ENCODE measurements at regions of chr5 and their contacts with region 1.

Region 1: DNA sequence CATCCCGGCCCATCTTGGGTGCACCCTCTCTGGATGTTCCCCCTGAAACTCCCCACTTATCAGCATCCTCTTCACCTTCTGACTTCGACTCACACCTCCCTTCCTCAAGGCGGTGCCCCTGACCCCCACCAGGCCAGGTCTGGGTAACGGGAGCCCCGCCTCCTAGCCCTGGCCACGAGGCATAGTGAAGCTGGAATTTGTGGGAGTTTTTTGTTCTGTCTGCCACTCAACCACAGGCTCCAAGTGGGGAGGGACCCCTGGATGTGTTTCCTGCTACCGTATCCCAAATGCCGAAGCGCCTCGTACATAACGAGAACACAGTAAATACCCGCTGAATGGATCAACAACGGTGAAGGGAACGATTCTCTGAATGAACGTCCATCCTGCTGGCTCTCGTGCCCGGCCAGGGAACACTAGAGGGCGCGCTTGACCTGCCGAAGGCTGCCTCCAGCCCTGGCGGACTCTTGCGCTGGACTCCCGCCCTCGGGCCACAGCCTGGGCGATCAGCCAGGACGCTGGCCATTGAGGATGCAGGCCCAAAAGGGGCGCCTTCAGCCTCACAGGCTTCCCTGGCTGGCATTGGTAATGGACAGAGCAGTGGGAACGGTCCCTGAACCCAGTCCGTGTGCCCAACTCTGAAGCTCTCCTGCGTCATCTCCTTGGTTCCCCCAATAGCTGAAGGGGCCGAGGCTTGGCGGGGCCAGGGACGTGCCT is 47.3 kb upstream of the PHYKPL start:
- DNase-seq: peak; percentile 83
- H3K4me3 ChIP-seq: no peak overlapping the region
- H3K27ac ChIP-seq: no peak overlapping the region
- H3K4me1 ChIP-seq: no peaks in the 10 kb centered on the region
- H3K27me3 ChIP-seq: peaks cover 2% of the 10 kb centered on the region
- CTCF ChIP-seq: peak; percentile 66 to 96 (median 91)
- POLR2A ChIP-seq: peak; percentile 15

Region 2: DNA sequence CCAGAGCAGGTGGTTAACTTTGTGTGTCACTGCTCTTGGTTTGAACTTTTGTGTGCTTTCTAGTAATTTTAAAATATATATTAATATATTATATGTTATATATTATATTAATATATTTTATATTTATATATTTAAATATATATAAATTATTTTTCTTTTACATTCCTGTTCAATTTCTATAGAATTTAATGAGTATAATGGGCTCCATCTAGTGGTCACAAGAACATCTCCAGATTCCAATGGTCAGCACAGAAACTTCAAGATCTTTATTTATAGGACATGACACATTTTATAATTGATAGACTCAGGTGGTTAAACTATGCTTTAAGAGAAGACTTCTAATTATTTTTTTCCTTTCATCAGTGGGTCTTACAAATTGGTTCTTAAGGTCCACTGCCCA is 271.2 kb after region 1 on chr5:
- intact Hi-C with region 1: loop called (anchors 2 kb)
- DNase-seq: no peak
- H3K4me3 ChIP-seq: no peak overlapping the region
- H3K27ac ChIP-seq: no peak overlapping the region
- H3K4me1 ChIP-seq: no peaks in the 10 kb centered on the region
- H3K27me3 ChIP-seq: no peaks in the 10 kb centered on the region
- CTCF ChIP-seq: peak; percentile 19 to 61 (median 50)
- POLR2A ChIP-seq: no peak

Region 3: GRCh38 chr5:178590141-178590923 is 310.4 kb after region 1 on chr5 and contains the start of gene COL23A1:
- intact Hi-C with region 1: loop called (anchors 2 kb)
- DNase-seq: no peak
- H3K4me3 ChIP-seq: peak within 1 kb of the TSS; percentile 33 to 38
- H3K27ac ChIP-seq: peak within 1 kb of the TSS; percentile 38 to 41
- H3K4me1 ChIP-seq: peaks cover 18% of the 10 kb centered on the region
- H3K27me3 ChIP-seq: no peaks in the 10 kb centered on the region
- CTCF ChIP-seq: peak; percentile 36 to 73 (median 70)
- POLR2A ChIP-seq: peak; percentile 30
- total RNA-seq, gene COL23A1: 2.7 to 6.1 TPM